GM10248 (cell line): ENCODE measurements at regions of chr2 and their contacts with region 1.

Region 1: GRCh38 chr2:41414486-41415230 is 633.2 kb upstream of the PKDCC start:
- DNase-seq: peak; percentile 14
- CTCF ChIP-seq: peak; percentile 46

Region 2: DNA sequence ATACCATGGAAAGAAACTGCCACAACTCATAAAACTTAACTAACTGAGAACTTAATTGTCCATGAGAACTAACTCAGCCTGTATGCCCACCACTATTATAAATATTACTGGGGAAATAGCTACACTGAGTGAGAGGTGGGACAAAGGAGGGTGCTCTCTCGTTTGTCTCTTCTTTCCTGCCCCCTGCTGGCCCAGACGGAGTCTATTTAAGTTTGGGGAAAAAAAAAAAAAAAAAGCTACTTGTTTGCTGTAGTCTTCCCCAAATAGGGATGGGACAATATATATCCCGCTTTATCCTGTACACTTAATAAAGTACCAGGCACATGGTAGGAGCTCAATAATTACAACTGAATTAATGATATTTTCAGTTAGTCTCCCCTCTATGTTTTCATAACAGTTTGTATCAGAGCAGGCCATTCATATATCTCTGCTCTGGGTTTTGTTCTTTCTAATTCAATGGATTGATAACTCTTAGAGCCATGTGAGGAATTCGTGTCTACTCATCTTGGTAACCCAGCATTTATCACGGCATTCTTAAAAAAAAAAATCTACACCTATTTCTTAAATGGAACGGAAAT is 14.5 kb before region 1 on chr2:
- CTCF ChIA-PET with region 1: interaction called, 15 read pairs
- POLR2A ChIA-PET with region 1: no interaction called
- DNase-seq: no peak
- CTCF ChIP-seq: peak; percentile 12

Region 3: GRCh38 chr2:41784496-41784895 is 369.8 kb after region 1 on chr2:
- CTCF ChIA-PET with region 1: interaction called, 11 read pairs
- POLR2A ChIA-PET with region 1: no interaction called
- DNase-seq: no peak
- CTCF ChIP-seq: no peak